ENCODE measurements at regions of chr2 and their contacts with region 1.

Region 1: GRCh38 chr2:136135921-136136906 is 18.3 kb upstream of the CXCR4 start:
- DNase-seq: peak; percentile 52
- ATAC-seq: peak; percentile 48
- H3K4me3 Mint-ChIP-seq: peak overlapping the region; percentile 62
- H3K27ac Mint-ChIP-seq: peak overlapping the region; percentile 99
- H3K4me1 Mint-ChIP-seq: peaks cover 99% of the 10 kb centered on the region
- H3K27me3 Mint-ChIP-seq: no peaks in the 10 kb centered on the region
- CTCF ChIP-seq: no peak

Region 2: GRCh38 chr2:135913727-135914365 is 222.4 kb before region 1 on chr2:
- CTCF ChIA-PET with region 1: interaction called, 4 read pairs
- POLR2A ChIA-PET with region 1: interaction called, 3 read pairs
- intact Hi-C with region 1: loop called (anchors 5 kb)
- DNase-seq: no peak
- ATAC-seq: peak; percentile 64
- H3K4me3 Mint-ChIP-seq: no peak overlapping the region
- H3K27ac Mint-ChIP-seq: no peak overlapping the region
- H3K4me1 Mint-ChIP-seq: peaks cover 6% of the 10 kb centered on the region
- H3K27me3 Mint-ChIP-seq: no peaks in the 10 kb centered on the region
- CTCF ChIP-seq: peak; percentile 87

Region 3: GRCh38 chr2:136019306-136019705 is 116.9 kb before region 1 on chr2:
- CTCF ChIA-PET with region 1: no interaction called
- POLR2A ChIA-PET with region 1: no interaction called
- intact Hi-C with region 1: loop called (anchors 1 kb)
- DNase-seq: no peak
- ATAC-seq: peak; percentile 89
- H3K4me3 Mint-ChIP-seq: peak overlapping the region; percentile 4
- H3K27ac Mint-ChIP-seq: peak overlapping the region; percentile 75
- H3K4me1 Mint-ChIP-seq: peaks cover 34% of the 10 kb centered on the region
- H3K27me3 Mint-ChIP-seq: no peaks in the 10 kb centered on the region
- CTCF ChIP-seq: no peak

Region 4: GRCh38 chr2:136171221-136171620 is 35.0 kb after region 1 on chr2:
- CTCF ChIA-PET with region 1: no interaction called
- POLR2A ChIA-PET with region 1: interaction called, 4 read pairs
- intact Hi-C with region 1: loop called (anchors 5 kb)
- DNase-seq: no peak
- ATAC-seq: peak; percentile 34
- H3K4me3 Mint-ChIP-seq: no peak overlapping the region
- H3K27ac Mint-ChIP-seq: no peak overlapping the region
- H3K4me1 Mint-ChIP-seq: peaks cover 39% of the 10 kb centered on the region
- H3K27me3 Mint-ChIP-seq: no peaks in the 10 kb centered on the region
- CTCF ChIP-seq: no peak

Region 5: GRCh38 chr2:136238286-136239078 is 102.3 kb after region 1 on chr2:
- CTCF ChIA-PET with region 1: interaction called, 12 read pairs
- POLR2A ChIA-PET with region 1: interaction called, 204 read pairs
- intact Hi-C with region 1: loop called (anchors 1 kb)
- DNase-seq: peak; percentile 38
- ATAC-seq: peak; percentile 77
- H3K4me3 Mint-ChIP-seq: peak overlapping the region; percentile 24
- H3K27ac Mint-ChIP-seq: peak overlapping the region; percentile 92
- H3K4me1 Mint-ChIP-seq: peaks cover 91% of the 10 kb centered on the region
- H3K27me3 Mint-ChIP-seq: no peaks in the 10 kb centered on the region
- CTCF ChIP-seq: no peak

Region 6: GRCh38 chr2:136378712-136379595 is 242.7 kb after region 1 on chr2:
- CTCF ChIA-PET with region 1: interaction called, 9 read pairs
- POLR2A ChIA-PET with region 1: interaction called, 44 read pairs
- intact Hi-C with region 1: loop called (anchors 1 kb)
- DNase-seq: no peak
- ATAC-seq: peak; percentile 40
- H3K4me3 Mint-ChIP-seq: no peak overlapping the region
- H3K27ac Mint-ChIP-seq: peak overlapping the region; percentile 92
- H3K4me1 Mint-ChIP-seq: peaks cover 81% of the 10 kb centered on the region
- H3K27me3 Mint-ChIP-seq: no peaks in the 10 kb centered on the region
- CTCF ChIP-seq: peak; percentile 44

Measured in activated B cell treated with CpG ODN at 0.5 μM for 24 hours (primary cell).